GM12878 (cell line): ENCODE measurements at regions of chr10 and their contacts with region 1.

Region 1: DNA sequence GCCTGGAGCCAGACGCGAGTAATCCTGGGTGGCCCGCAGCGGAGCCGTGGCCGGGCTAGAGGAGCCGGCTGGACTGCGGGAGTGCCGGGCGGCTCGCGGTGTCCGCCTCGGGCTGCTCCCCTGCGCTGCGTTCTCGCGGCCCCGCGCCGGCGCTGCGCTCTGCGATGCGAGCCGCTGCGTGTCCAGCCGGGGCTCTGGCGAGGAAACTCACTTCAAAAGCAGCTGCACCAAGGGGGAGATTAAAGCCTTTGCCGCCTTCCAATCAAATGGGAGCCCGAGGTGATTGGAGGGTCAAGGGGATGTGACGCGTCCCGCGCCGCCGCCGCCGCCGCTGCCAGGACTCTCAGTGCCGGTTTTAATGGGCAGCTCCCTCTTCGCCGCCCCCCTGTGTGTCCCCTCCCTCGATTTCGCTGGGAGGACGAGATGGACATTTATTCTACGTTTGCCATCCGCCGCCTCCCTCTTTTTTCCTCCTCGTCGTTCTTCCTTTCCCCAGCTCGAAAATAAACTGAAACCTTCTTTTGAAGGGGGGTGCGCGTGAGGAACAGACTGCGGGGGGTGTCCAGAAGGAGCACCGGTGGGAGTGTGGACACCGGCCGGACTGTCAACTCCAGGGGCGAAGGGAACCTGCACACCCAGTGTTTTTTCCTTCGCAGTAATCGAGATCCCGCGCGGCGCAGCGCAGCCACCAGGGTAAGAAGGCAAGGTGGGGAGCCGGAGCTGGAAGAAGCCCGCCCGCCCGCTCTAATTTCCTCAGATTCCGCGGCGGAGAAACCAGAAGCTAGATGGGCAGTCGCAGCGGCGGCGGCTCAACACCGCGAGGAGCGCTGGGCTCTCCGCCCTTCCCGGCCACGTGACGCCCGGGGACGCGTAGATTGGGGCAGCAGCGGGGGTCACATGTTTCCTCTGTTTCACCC is at the start of gene ZNF503:
- DNase-seq: peak; percentile 27
- ATAC-seq: peak; percentile 82
- H3K4me3 ChIP-seq: peak within 1 kb of the TSS; percentile 55
- H3K27ac ChIP-seq: no peak within 1 kb of the TSS
- H3K4me1 ChIP-seq: no peaks in the 10 kb centered on the region; the same call in 1 of the 2 replicates
- H3K27me3 ChIP-seq: peaks cover 7 to 10% of the 10 kb centered on the region in 2 experiments
- CTCF ChIP-seq: no peak
- EP300 ChIP-seq: no peak
- POLR2A ChIP-seq: 0 out of 2 replicates have a peak, but pooled peaks have one; percentile 25
- RAD21 ChIP-seq: no peak
- polyA plus RNA-seq, gene ZNF503: 0.05 to 0.11 TPM

Region 2: GRCh38 chr10:75272896-75273295 is 128.9 kb before region 1 on chr10:
- CTCF ChIA-PET with region 1: no interaction called
- POLR2A ChIA-PET with region 1: no interaction called
- RAD21 ChIA-PET with region 1: no interaction called
- SMC1A ChIA-PET with region 1: no interaction called
- in situ Hi-C with region 1: no loop called
- intact Hi-C with region 1: no loop called
- DNase-seq: no peak
- ATAC-seq: no peak
- H3K4me3 ChIP-seq: no peak overlapping the region
- H3K27ac ChIP-seq: no peak overlapping the region
- H3K4me1 ChIP-seq: no peaks in the 10 kb centered on the region
- H3K27me3 ChIP-seq: no peaks in the 10 kb centered on the region; a peak in 1 of 4 replicates
- CTCF ChIP-seq: no peak
- EP300 ChIP-seq: no peak
- POLR2A ChIP-seq: no peak
- RAD21 ChIP-seq: no peak

Region 3: GRCh38 chr10:75547391-75548298 is 145.8 kb after region 1 on chr10:
- CTCF ChIA-PET with region 1: no interaction called
- POLR2A ChIA-PET with region 1: no interaction called
- RAD21 ChIA-PET with region 1: interaction called, 7 read pairs
- SMC1A ChIA-PET with region 1: interaction called, 4 read pairs
- in situ Hi-C with region 1: no loop called
- intact Hi-C with region 1: loop called (anchors 5 kb)
- DNase-seq: peak; percentile 33
- ATAC-seq: peak; percentile 95
- H3K4me3 ChIP-seq: no peak overlapping the region
- H3K27ac ChIP-seq: no peak overlapping the region
- H3K4me1 ChIP-seq: no peaks in the 10 kb centered on the region
- H3K27me3 ChIP-seq: no peaks in the 10 kb centered on the region
- CTCF ChIP-seq: no peak
- EP300 ChIP-seq: 0 out of 4 replicates have a peak, but pooled peaks of 1 of the 2 experiments have one; percentile 13
- POLR2A ChIP-seq: no peak
- RAD21 ChIP-seq: no peak

Region 4: GRCh38 chr10:75640803-75641202 is 239.0 kb after region 1 on chr10:
- CTCF ChIA-PET with region 1: no interaction called
- POLR2A ChIA-PET with region 1: no interaction called
- RAD21 ChIA-PET with region 1: interaction called, 3 read pairs
- SMC1A ChIA-PET with region 1: no interaction called
- in situ Hi-C with region 1: no loop called
- intact Hi-C with region 1: loop called (anchors 10 kb)
- DNase-seq: no peak
- ATAC-seq: no peak
- H3K4me3 ChIP-seq: no peak overlapping the region
- H3K27ac ChIP-seq: no peak overlapping the region
- H3K4me1 ChIP-seq: no peaks in the 10 kb centered on the region
- H3K27me3 ChIP-seq: no peaks in the 10 kb centered on the region
- CTCF ChIP-seq: no peak
- EP300 ChIP-seq: no peak
- POLR2A ChIP-seq: no peak
- RAD21 ChIP-seq: no peak

Region 5: GRCh38 chr10:75772153-75772887 is 370.5 kb after region 1 on chr10:
- CTCF ChIA-PET with region 1: no interaction called
- POLR2A ChIA-PET with region 1: interaction called, 3 read pairs
- RAD21 ChIA-PET with region 1: interaction called, 4 read pairs
- SMC1A ChIA-PET with region 1: interaction called, 3 read pairs
- in situ Hi-C with region 1: no loop called
- intact Hi-C with region 1: loop called (anchors 5 kb)
- DNase-seq: no peak
- ATAC-seq: peak; percentile 59
- H3K4me3 ChIP-seq: no peak overlapping the region
- H3K27ac ChIP-seq: no peak overlapping the region
- H3K4me1 ChIP-seq: peaks cover 4% of the 10 kb centered on the region; the same call in 1 of the 2 replicates
- H3K27me3 ChIP-seq: peaks cover 0 to 2% of the 10 kb centered on the region in 2 experiments; a peak in 1 of 4 replicates
- CTCF ChIP-seq: no peak
- EP300 ChIP-seq: no peak
- POLR2A ChIP-seq: no peak
- RAD21 ChIP-seq: no peak

Region 6: GRCh38 chr10:76036111-76036940 is 634.5 kb after region 1 on chr10:
- CTCF ChIA-PET with region 1: interaction called, 26 read pairs
- POLR2A ChIA-PET with region 1: interaction called, 3 read pairs
- RAD21 ChIA-PET with region 1: interaction called, 38 read pairs
- SMC1A ChIA-PET with region 1: interaction called, 9 read pairs
- in situ Hi-C with region 1: loop called (anchors 25 kb)
- intact Hi-C with region 1: loop called (anchors 2 kb)
- DNase-seq: no peak
- ATAC-seq: peak; percentile 90
- H3K4me3 ChIP-seq: no peak overlapping the region
- H3K27ac ChIP-seq: no peak overlapping the region
- H3K4me1 ChIP-seq: no peaks in the 10 kb centered on the region
- H3K27me3 ChIP-seq: no peaks in the 10 kb centered on the region
- CTCF ChIP-seq: peak; percentile 86 to 88 (median 87)
- EP300 ChIP-seq: no peak
- POLR2A ChIP-seq: no peak
- RAD21 ChIP-seq: peak; percentile 66

Region 7: DNA sequence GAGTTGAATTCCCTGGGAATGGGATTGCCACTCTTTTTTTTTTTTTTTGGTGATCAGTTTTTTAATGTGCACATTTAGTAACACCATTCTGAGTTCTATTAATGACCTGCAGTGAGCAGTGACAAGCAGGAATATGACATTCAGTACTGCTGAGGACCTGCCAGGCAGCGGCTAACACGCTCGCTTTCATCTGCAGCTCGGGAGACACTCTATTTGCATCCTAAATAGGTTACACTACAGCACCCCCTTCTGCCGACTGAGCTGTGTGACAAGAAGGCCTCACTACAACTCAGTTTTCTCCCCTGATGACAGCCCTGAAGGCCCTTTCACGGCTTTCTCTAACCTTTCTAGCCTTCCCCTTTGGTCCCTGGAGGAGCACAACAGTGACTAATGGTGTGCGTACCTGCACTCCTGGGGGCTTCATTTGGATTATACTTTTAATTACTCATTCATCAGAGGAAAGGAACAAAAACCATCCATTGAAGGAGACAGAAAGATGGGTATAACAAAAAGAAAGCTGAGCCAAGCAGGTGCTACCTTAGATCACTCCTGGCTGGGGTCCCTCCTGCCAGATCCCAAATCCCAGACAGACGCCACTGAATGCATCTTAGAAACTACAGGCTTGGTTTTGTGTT is 902.0 kb after region 1 on chr10:
- CTCF ChIA-PET with region 1: interaction called, 19 read pairs
- POLR2A ChIA-PET with region 1: no interaction called
- RAD21 ChIA-PET with region 1: interaction called, 23 read pairs
- SMC1A ChIA-PET with region 1: interaction called, 6 read pairs
- in situ Hi-C with region 1: no loop called
- intact Hi-C with region 1: loop called (anchors 10 kb)
- DNase-seq: no peak
- ATAC-seq: peak; percentile 95
- H3K4me3 ChIP-seq: no peak overlapping the region
- H3K27ac ChIP-seq: no peak overlapping the region
- H3K4me1 ChIP-seq: no peaks in the 10 kb centered on the region
- H3K27me3 ChIP-seq: no peaks in the 10 kb centered on the region
- CTCF ChIP-seq: peak; percentile 29 to 53 (median 39); a peak in 3 of 6 replicates
- EP300 ChIP-seq: no peak
- POLR2A ChIP-seq: no peak
- RAD21 ChIP-seq: peak; percentile 30; the same call in 1 of the 2 replicates